ENCODE measurements at regions of chr7 and their contacts with region 1.

Region 1: DNA sequence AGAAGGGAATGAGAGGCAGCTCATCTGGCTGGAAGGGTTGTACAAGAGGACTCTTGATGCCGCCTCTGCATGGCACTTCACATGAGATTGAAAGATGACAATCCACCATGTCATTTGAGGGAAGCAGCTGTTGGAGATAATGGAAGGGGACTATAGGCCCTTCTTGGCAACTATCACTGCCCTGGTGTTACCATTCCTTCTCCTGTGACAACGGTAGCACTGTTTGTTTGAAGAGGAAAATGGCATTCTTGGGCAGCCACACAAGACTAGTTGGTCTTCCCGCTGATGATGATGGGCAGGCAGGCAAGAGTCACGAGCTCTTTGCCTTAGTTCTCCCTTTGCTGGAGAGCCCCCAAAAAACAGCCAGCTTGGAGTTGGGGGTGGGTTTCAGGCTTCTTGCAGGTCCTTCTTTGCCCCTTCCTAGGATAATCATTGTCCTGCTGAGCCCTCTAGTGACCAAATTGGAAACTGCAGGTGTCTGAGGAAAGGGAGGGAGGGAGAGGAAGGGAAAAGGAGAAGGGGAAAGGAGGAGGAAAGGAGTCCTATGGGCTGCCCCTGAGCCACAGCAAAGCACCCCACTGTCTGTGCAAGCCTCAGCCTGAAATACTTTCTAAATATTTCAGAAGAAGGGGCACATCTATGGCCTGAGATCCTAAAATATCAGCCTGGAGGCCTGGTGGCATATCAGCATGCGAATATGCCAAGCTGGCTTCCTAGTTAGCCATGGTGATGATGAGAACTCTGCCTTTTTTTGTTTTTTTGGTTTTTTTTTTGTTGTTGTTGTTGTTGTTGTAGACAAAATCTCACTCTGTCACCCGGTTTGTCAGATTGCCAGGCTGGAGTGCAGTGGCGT is 165.6 kb upstream of the KMT2E start:
- DNase-seq: peak; percentile 72
- H3K4me3 Mint-ChIP-seq: no peak overlapping the region
- H3K27ac Mint-ChIP-seq: no peak overlapping the region
- H3K4me1 Mint-ChIP-seq: no peaks in the 10 kb centered on the region
- H3K27me3 Mint-ChIP-seq: peaks cover 52% of the 10 kb centered on the region
- CTCF ChIP-seq: peak; percentile 93

Region 2: DNA sequence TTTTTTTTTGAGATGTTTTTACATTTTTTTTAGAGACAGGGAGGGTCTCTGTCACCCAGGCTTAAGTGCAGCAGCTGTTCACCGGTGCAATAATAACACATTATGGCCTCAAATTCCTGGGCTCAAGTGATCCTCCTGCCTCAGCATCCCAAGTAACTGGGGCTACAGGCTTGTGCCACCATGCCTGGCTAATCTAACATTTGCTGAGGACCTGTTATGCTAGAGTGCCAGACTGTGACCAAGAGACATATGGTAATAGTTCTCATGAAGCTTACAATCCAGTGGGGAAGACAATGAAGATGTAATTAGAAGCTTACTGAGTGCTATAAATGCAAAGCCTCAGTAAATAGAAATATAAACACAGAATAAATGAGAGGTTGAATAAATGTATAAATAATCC is 622.9 kb before region 1 on chr7:
- CTCF ChIA-PET with region 1: interaction called, 98 read pairs
- POLR2A ChIA-PET with region 1: no interaction called
- intact Hi-C with region 1: no loop called
- DNase-seq: no peak
- H3K4me3 Mint-ChIP-seq: no peak overlapping the region
- H3K27ac Mint-ChIP-seq: no peak overlapping the region
- H3K4me1 Mint-ChIP-seq: no peaks in the 10 kb centered on the region
- H3K27me3 Mint-ChIP-seq: peaks cover 48% of the 10 kb centered on the region
- CTCF ChIP-seq: no peak

Region 3: GRCh38 chr7:104267701-104268368 is 580.5 kb before region 1 on chr7:
- CTCF ChIA-PET with region 1: interaction called, 40 read pairs
- POLR2A ChIA-PET with region 1: no interaction called
- intact Hi-C with region 1: no loop called
- DNase-seq: peak; percentile 27
- H3K4me3 Mint-ChIP-seq: no peak overlapping the region
- H3K27ac Mint-ChIP-seq: no peak overlapping the region
- H3K4me1 Mint-ChIP-seq: no peaks in the 10 kb centered on the region
- H3K27me3 Mint-ChIP-seq: peaks cover 31% of the 10 kb centered on the region
- CTCF ChIP-seq: peak; percentile 34

Region 4: GRCh38 chr7:104643587-104644217 is 204.7 kb before region 1 on chr7:
- CTCF ChIA-PET with region 1: interaction called, 34 read pairs
- POLR2A ChIA-PET with region 1: no interaction called
- intact Hi-C with region 1: loop called (anchors 1 kb)
- DNase-seq: peak; percentile 38
- H3K4me3 Mint-ChIP-seq: no peak overlapping the region
- H3K27ac Mint-ChIP-seq: no peak overlapping the region
- H3K4me1 Mint-ChIP-seq: no peaks in the 10 kb centered on the region
- H3K27me3 Mint-ChIP-seq: peaks cover 82% of the 10 kb centered on the region
- CTCF ChIP-seq: peak; percentile 35

Region 5: GRCh38 chr7:104862719-104863118 is 14.4 kb after region 1 on chr7:
- CTCF ChIA-PET with region 1: interaction called, 49 read pairs
- POLR2A ChIA-PET with region 1: interaction called, 3 read pairs
- intact Hi-C with region 1: no loop called
- DNase-seq: peak; percentile 44
- H3K4me3 Mint-ChIP-seq: no peak overlapping the region
- H3K27ac Mint-ChIP-seq: no peak overlapping the region
- H3K4me1 Mint-ChIP-seq: no peaks in the 10 kb centered on the region
- H3K27me3 Mint-ChIP-seq: peaks cover 90% of the 10 kb centered on the region
- CTCF ChIP-seq: peak; percentile 16